Activated CD4-positive, alpha-beta memory T cell treated with anti-CD3 and anti-CD28 coated beads, Interleukin-2, amount 10 ng/mL, durations not matched to agents 7 days and 5 days (primary cell): ENCODE measurements at regions of chr3 and their contacts with region 1.

Region 1: DNA sequence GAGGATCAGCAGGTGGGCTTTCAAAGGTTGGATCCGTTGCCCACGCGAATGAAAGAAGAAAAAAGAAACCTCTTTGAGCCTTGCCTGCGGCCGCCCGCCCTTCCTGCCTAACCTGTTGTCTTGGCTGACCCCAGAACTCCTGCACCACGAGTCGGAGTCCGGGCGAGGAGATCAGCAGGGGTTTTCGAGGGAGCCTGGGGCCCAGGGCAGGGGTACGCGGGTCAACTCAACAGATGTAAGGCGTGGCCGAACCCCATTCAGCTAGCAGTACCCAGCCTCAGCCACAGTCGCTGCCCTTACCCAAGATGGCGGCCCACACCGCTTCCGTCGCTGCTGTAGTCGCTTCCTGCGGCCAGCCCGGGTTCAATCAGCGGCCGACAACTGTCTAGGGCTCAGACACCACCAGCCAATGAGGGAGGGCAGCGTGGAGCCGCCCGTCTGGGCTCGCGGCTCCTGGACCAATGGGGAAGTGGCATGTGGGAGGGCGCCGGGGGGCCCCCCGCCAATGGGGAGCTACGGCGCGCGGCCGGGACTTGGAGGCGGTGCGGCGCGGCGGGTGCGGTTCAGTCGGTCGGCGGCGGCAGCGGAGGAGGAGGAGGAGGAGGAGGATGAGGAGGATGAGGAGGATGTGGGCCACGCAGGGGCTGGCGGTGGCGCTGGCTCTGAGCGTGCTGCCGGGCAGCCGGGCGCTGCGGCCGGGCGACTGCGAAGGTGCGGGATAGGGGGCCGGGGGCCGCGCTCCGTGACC is at the start of gene MANF:
- DNase-seq: peak; percentile 99
- H3K4me3 Mint-ChIP-seq: peak within 1 kb of the TSS; percentile 98
- H3K27ac Mint-ChIP-seq: peak within 1 kb of the TSS; percentile 95
- H3K4me1 Mint-ChIP-seq: peaks cover 51% of the 10 kb centered on the region
- H3K27me3 Mint-ChIP-seq: no peaks in the 10 kb centered on the region
- total RNA-seq, gene MANF: 143 to 149 TPM

Region 2: GRCh38 chr3:50600841-50601591 is 783.9 kb before region 1 on chr3:
- CTCF ChIA-PET with region 1: no interaction called
- POLR2A ChIA-PET with region 1: interaction called, 22 read pairs
- DNase-seq: peak; percentile 92
- H3K4me3 Mint-ChIP-seq: peak overlapping the region; percentile 71
- H3K27ac Mint-ChIP-seq: peak overlapping the region; percentile 99
- H3K4me1 Mint-ChIP-seq: peaks cover 88% of the 10 kb centered on the region
- H3K27me3 Mint-ChIP-seq: no peaks in the 10 kb centered on the region

Region 3: GRCh38 chr3:51024765-51025632 is 359.9 kb before region 1 on chr3:
- CTCF ChIA-PET with region 1: interaction called, 3 read pairs
- POLR2A ChIA-PET with region 1: interaction called, 11 read pairs
- DNase-seq: peak; percentile 85
- H3K4me3 Mint-ChIP-seq: peak overlapping the region; percentile 59
- H3K27ac Mint-ChIP-seq: peak overlapping the region; percentile 91
- H3K4me1 Mint-ChIP-seq: peaks cover 32% of the 10 kb centered on the region
- H3K27me3 Mint-ChIP-seq: no peaks in the 10 kb centered on the region

Region 4: DNA sequence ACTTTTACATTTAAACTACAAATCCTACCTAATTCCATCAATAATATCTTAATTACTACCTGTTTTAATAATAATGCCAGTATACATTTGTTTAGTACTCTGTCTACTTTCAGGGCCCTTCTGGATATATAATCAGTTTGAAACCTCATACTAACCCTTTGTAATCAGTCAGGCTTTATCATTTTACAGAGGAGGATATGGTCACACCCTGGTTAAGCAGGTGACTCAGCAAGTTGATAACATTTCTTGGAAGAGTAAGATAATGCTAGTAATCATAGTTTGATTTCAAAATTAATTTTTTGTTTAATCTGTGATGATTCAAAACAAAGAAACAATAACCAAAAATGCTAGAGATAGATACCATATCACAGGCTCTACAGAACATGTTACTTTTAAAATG is 208.0 kb before region 1 on chr3:
- CTCF ChIA-PET with region 1: no interaction called
- POLR2A ChIA-PET with region 1: no interaction called
- DNase-seq: no peak
- H3K4me3 Mint-ChIP-seq: no peak overlapping the region
- H3K27ac Mint-ChIP-seq: no peak overlapping the region
- H3K4me1 Mint-ChIP-seq: peaks cover 9% of the 10 kb centered on the region
- H3K27me3 Mint-ChIP-seq: no peaks in the 10 kb centered on the region

Region 5: DNA sequence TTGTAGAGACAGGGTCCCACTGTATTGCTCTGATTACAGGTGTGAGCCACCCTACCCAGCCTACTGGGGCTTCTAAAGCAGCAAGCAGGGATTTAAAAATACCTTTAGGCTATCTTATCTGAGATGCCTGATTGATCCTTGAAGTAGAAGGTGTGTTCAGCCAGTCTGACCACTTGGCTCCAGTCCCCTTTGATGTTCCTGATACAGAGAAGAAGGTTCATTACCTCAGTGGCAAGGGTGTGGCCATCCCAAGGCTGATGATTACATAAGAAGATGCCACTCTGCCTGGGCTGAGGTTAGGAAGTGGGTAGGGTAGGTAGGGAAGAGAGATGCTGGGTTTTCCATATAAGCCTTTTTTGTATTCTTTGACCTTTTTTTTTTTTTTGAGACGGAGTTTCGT is 126.1 kb after region 1 on chr3:
- CTCF ChIA-PET with region 1: no interaction called
- POLR2A ChIA-PET with region 1: no interaction called
- DNase-seq: no peak
- H3K4me3 Mint-ChIP-seq: no peak overlapping the region
- H3K27ac Mint-ChIP-seq: no peak overlapping the region
- H3K4me1 Mint-ChIP-seq: peaks cover 24% of the 10 kb centered on the region
- H3K27me3 Mint-ChIP-seq: no peaks in the 10 kb centered on the region

Region 6: DNA sequence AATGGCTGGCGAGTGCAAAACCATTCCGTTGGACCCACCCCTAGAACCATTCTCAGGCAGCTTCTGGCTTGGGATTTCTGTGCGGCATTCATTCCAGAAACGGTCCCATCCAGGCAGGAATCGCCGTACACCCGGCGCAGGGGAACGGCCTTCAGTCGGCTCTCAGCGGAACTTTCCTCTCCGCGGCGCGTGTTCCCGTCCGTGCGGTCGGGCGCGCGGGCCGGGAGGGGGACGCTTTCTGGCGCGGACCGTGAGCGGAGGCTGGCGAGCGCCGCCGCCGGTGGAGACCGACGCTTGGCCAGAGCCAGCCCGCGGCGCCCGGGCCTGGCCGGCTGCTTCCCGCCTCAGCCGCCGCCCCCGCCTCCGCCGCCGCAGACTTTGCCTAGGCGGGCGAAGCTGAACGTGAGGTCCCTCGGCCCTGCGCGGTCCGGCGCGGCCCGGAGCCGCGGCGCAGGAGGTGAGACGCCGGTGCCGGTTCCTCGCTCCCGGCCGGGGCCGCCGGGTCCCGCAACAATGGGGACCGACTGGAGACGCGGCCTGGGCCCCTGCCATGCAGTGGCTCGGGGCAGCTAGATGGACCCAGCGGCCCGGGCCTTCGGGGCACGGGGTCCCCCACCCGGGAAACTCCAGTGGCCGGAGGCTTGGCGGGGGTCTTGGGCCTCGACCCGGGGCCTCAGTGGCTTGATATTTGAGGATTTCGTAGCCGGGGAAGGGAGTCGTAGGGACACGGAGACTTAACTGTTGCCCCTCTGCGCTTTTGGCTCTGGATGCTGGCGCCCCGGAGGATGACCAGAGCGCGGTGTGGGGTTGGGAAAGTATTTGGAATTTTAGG is 153.8 kb after region 1 on chr3 and contains the start of gene RAD54L2:
- CTCF ChIA-PET with region 1: no interaction called
- POLR2A ChIA-PET with region 1: interaction called, 12 read pairs
- DNase-seq: peak; percentile 79
- H3K4me3 Mint-ChIP-seq: peak within 1 kb of the TSS; percentile 89
- H3K27ac Mint-ChIP-seq: peak within 1 kb of the TSS; percentile 80
- H3K4me1 Mint-ChIP-seq: peaks cover 35% of the 10 kb centered on the region
- H3K27me3 Mint-ChIP-seq: no peaks in the 10 kb centered on the region
- total RNA-seq, gene RAD54L2: 30.4 to 30.5 TPM